Activated naive CD8-positive, alpha-beta T cell treated with anti-CD3 and anti-CD28 coated beads, Interleukin-2, amount 10 ng/mL, durations not matched to agents 7 days and 5 days (primary cell): ENCODE measurements at regions of chr17 and their contacts with region 1.

Region 1: DNA sequence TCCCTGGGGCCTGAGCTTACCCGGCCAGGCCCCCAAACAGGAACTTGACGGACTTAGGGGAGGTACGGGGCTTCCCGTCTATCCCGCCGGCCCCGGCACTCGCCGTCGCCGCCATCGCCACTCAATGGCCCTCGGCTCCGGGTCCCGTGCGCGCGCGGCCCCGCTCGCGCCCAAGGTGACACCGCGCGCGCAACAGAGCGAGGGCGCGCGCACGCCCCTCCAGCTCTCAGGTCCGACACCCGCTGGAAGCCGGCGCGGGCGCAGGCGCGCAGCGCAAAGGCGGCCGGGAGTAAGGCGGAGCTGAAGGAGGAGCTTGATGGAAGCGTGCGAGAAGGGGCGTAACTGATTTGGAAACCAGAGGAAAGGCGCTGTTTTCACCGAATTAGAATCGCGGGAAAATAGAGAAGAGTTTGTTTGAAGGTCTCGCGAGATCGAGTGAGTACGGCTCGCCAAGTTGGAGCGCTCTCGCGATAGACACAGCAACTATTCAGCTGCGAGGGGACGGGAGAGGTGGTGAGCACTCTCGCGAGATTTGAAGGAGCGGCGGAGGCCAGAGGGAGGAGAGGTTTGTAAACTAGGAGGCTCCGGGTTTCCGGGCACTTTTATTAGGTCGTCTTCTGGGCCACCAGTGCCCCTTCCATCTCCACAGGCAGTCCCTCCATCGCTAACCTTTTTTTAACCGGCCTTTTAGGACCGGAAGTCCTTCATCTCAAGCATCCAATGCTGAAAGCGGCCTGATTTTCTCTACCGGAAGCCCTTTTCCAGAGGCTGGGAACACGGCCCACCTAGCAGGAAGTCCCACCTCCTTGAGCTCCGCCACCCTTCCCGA is at the starts of genes RNF167 and SLC25A11:
- DNase-seq: peak; percentile 94
- ATAC-seq: peak; percentile 77
- H3K4me3 Mint-ChIP-seq: peak within 1 kb of the TSS; percentile 100
- H3K27ac Mint-ChIP-seq: peak within 1 kb of the TSS; percentile 88
- H3K4me1 Mint-ChIP-seq: peaks cover 49% of the 10 kb centered on the region
- H3K27me3 Mint-ChIP-seq: no peaks in the 10 kb centered on the region
- total RNA-seq, gene RNF167: 202 TPM
- total RNA-seq, gene SLC25A11: 67.6 to 78.1 TPM

Region 2: GRCh38 chr17:4908301-4908700 is 31.7 kb before region 1 on chr17:
- POLR2A ChIA-PET with region 1: interaction called, 14 read pairs
- DNase-seq: peak; percentile 41
- ATAC-seq: peak; percentile 34
- H3K4me3 Mint-ChIP-seq: no peak overlapping the region
- H3K27ac Mint-ChIP-seq: no peak overlapping the region
- H3K4me1 Mint-ChIP-seq: peaks cover 4% of the 10 kb centered on the region
- H3K27me3 Mint-ChIP-seq: peaks cover 11% of the 10 kb centered on the region

Region 3: DNA sequence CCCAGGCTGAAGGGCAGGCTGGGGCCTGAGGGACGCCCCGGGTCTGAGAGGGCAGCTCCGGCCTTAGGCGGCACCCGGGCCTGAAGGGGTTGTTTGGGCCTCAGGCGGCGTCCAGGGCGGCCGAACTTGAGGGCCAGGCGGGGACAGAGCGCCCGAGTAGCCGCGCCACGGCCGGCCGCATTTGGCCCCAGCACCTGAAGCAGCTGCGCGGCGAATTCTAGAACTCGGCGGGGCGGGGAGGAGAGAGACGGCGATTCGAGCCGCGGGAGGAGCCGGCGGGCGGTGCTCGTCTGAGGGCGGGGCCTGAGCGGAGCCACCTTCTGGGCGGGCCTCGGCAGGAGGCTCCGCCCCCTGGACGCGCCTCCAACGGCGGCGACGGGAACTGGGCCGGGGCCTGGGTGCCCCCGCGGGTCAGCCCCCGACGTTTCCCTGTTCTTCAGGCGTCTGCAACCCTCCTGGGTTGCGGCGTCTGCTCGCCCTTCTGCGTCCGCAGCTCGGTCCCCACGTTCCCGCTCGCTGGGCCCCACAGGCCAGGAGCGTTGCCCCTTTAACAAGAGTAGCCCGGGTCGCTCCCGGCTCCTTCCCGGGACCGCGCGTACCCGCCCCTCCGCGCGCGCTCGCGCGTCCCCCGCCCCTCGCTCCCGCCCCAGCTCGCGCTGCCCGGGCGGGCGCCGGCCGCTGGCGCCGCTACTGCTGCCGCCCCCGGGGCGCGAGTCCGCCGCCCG is 57.5 kb after region 1 on chr17 and contains the starts of genes INCA1 and KIF1C:
- POLR2A ChIA-PET with region 1: interaction called, 20 read pairs
- DNase-seq: peak; percentile 97
- ATAC-seq: peak; percentile 84
- H3K4me3 Mint-ChIP-seq: peak within 1 kb of the TSS; percentile 89
- H3K27ac Mint-ChIP-seq: peak within 1 kb of the TSS; percentile 86
- H3K4me1 Mint-ChIP-seq: peaks cover 14% of the 10 kb centered on the region
- H3K27me3 Mint-ChIP-seq: no peaks in the 10 kb centered on the region
- total RNA-seq, gene INCA1: 0.42 to 0.54 TPM
- total RNA-seq, gene KIF1C: 35.5 to 37.3 TPM

Region 4: DNA sequence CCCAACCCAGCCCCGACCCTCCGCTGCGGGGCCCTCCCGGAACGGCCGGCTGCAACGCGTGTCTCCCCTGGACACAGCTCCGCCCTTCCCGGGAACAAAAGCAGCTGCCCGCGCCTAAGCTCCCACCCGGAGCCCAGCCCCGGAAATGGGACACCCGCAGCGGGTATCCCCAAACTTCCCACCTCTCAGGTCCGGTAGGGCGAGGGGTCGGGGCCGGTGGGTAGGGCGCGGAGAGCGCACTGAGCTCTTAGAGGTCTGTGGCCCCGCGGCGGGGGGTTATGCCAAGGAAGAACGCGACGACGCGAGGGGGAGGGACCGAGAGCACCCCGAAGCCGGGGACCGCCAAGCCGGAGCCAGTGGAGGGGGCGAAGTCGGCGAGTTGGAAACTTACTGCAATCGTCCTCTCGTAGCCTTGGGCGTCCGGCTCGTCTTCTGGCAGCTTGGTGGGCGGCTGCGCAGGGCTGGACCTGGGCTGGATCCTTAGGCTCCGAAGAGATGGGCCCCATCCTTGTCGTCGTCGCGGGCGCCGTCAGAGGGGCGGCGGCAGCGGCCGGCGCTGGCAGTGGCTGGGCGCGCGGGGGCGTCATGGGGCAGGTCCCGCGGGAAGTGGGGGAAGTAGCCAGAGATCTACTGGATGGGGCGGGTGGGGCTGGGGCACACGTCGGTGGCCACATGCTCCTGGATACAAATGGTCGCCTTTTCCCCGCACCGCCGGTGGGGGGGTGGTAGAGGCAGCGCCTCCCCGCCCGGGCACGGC is 182.8 kb after region 1 on chr17:
- POLR2A ChIA-PET with region 1: no interaction called
- DNase-seq: peak; percentile 37
- ATAC-seq: peak; percentile 42
- H3K4me3 Mint-ChIP-seq: no peak overlapping the region
- H3K27ac Mint-ChIP-seq: no peak overlapping the region
- H3K4me1 Mint-ChIP-seq: no peaks in the 10 kb centered on the region
- H3K27me3 Mint-ChIP-seq: peaks cover 43% of the 10 kb centered on the region